Gastrocnemius medialis (tissue), 4 donors: ENCODE measurements at regions of chr3 and their contacts with region 1.

Region 1: GRCh38 chr3:47243419-47244147 is 39.0 kb downstream of the KIF9 start:
- DNase-seq: no peak
- ATAC-seq: no peak
- H3K4me3 ChIP-seq: no peak overlapping the region
- H3K27ac ChIP-seq: no peak overlapping the region
- H3K4me1 ChIP-seq: no peaks in the 10 kb centered on the region
- H3K27me3 ChIP-seq: no peaks in the 10 kb centered on the region
- CTCF ChIP-seq: no peak
- POLR2A ChIP-seq: no peak

Region 2: GRCh38 chr3:47324278-47324865 is 80.8 kb after region 1 on chr3:
- in situ Hi-C with region 1: loop called in 1 of 4 experiments (anchors 10 kb)
- intact Hi-C with region 1: no loop called
- DNase-seq: peak; percentile 16 to 42
- ATAC-seq: peak; percentile 94 to 99
- H3K4me3 ChIP-seq: no peak overlapping the region
- H3K27ac ChIP-seq: no peak overlapping the region
- H3K4me1 ChIP-seq: no peaks in the 10 kb centered on the region
- H3K27me3 ChIP-seq: no peaks in the 10 kb centered on the region
- CTCF ChIP-seq: peak; percentile 36 to 77 (median 64)
- POLR2A ChIP-seq: no peak